PC-9 (cell line): ENCODE measurements at regions of chr4 and their contacts with region 1.

Region 1: GRCh38 chr4:3257556-3258482 is 8.9 kb downstream of the MSANTD1 start:
- DNase-seq: peak; percentile 39 to 83
- H3K4me3 ChIP-seq: no peak overlapping the region
- H3K27ac ChIP-seq: peak overlapping the region; percentile 65
- H3K4me1 ChIP-seq: peaks cover 25% of the 10 kb centered on the region
- H3K27me3 ChIP-seq: no peaks in the 10 kb centered on the region
- CTCF ChIP-seq: no peak

Region 2: GRCh38 chr4:3531879-3532713 is 274.3 kb after region 1 on chr4 and contains the start of gene LRPAP1:
- CTCF ChIA-PET with region 1: no interaction called
- POLR2A ChIA-PET with region 1: no interaction called
- intact Hi-C with region 1: loop called (anchors 5 kb)
- DNase-seq: peak; percentile 58 to 86
- H3K4me3 ChIP-seq: peak within 1 kb of the TSS; percentile 81
- H3K27ac ChIP-seq: no peak within 1 kb of the TSS
- H3K4me1 ChIP-seq: peaks cover 8% of the 10 kb centered on the region; the same call in 1 of the 2 replicates
- H3K27me3 ChIP-seq: 0 out of 2 replicates have a peak, but pooled peaks cover 6% of the 10 kb centered on the region
- CTCF ChIP-seq: no peak
- total RNA-seq, gene LRPAP1: 126 and 149 TPM in 2 replicates